AG04450 (cell line): ENCODE measurements at regions of chr11 and their contacts with region 1.

Region 1: GRCh38 chr11:117807482-117808327 is 10.7 kb upstream of the DSCAML1 start:
- DNase-seq: peak; percentile 29
- H3K4me3 ChIP-seq: no peak overlapping the region
- H3K27ac ChIP-seq: no peak overlapping the region
- H3K27me3 ChIP-seq: peaks cover 19% of the 10 kb centered on the region
- CTCF ChIP-seq: peak; percentile 92

Region 2: GRCh38 chr11:117597071-117597470 is 210.6 kb before region 1 on chr11:
- CTCF ChIA-PET with region 1: no interaction called
- POLR2A ChIA-PET with region 1: no interaction called
- DNase-seq: no peak
- H3K4me3 ChIP-seq: no peak overlapping the region
- H3K27ac ChIP-seq: no peak overlapping the region
- H3K27me3 ChIP-seq: peaks cover 4% of the 10 kb centered on the region
- CTCF ChIP-seq: no peak

Region 3: GRCh38 chr11:117790279-117790678 is 17.4 kb before region 1 on chr11:
- CTCF ChIA-PET with region 1: interaction called, 11 read pairs
- POLR2A ChIA-PET with region 1: no interaction called
- DNase-seq: no peak
- H3K4me3 ChIP-seq: no peak overlapping the region
- H3K27ac ChIP-seq: no peak overlapping the region
- H3K27me3 ChIP-seq: peaks cover 35% of the 10 kb centered on the region
- CTCF ChIP-seq: no peak

Region 4: DNA sequence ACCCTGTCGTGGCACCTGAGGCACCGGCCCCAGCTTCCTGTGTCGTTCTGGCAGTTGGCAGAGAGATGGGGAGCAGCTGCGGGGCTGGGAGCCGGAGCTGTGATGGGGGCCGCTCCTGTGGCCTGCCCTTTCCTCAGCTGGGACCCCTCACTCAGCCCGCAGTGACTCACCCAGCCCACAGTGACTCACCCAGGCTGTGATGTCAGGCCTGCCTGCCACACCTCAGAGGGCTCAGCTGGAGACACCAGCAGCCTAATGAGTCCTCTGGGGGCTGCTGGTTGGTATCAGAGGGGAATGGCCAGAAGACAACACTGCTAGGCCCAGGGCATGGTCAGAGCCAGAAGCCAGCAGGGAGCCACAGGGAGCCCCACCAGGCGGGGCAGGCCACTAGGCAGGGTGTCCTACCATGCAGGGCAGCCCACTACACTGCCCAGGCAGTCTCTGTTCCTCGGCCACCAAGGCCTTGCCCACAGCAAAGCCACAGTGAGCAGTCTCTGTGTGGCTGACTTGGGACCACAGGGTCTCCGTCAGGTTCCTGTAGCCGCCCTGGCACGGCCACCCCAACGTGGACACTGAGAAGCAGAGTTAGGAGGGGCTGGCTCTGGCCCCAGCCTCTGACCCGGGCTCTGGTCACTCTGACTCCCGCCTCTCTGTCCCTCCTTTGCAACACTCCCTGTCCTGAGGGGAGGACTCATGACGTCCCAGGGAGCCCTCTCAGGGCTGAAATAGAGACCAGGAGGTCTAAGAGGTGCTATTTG is 21.1 kb after region 1 on chr11:
- CTCF ChIA-PET with region 1: interaction called, 16 read pairs
- POLR2A ChIA-PET with region 1: no interaction called
- DNase-seq: peak; percentile 51
- H3K4me3 ChIP-seq: no peak overlapping the region
- H3K27ac ChIP-seq: no peak overlapping the region
- H3K27me3 ChIP-seq: peaks cover 16% of the 10 kb centered on the region
- CTCF ChIP-seq: no peak

Region 5: GRCh38 chr11:117843666-117844484 is 36.2 kb after region 1 on chr11:
- CTCF ChIA-PET with region 1: interaction called, 19 read pairs
- POLR2A ChIA-PET with region 1: no interaction called
- DNase-seq: peak; percentile 20
- H3K4me3 ChIP-seq: no peak overlapping the region
- H3K27ac ChIP-seq: no peak overlapping the region
- H3K27me3 ChIP-seq: peaks cover 7% of the 10 kb centered on the region
- CTCF ChIP-seq: peak; percentile 98

Region 6: GRCh38 chr11:117907251-117907981 is 99.7 kb after region 1 on chr11:
- CTCF ChIA-PET with region 1: interaction called, 11 read pairs
- POLR2A ChIA-PET with region 1: no interaction called
- DNase-seq: peak; percentile 70
- H3K4me3 ChIP-seq: no peak overlapping the region; the same call in 1 of the 2 replicates
- H3K27ac ChIP-seq: no peak overlapping the region
- H3K27me3 ChIP-seq: peaks cover 3% of the 10 kb centered on the region
- CTCF ChIP-seq: no peak

Region 7: GRCh38 chr11:118051611-118052461 is 244.1 kb after region 1 on chr11:
- CTCF ChIA-PET with region 1: interaction called, 86 read pairs
- POLR2A ChIA-PET with region 1: no interaction called
- DNase-seq: no peak
- H3K4me3 ChIP-seq: no peak overlapping the region
- H3K27ac ChIP-seq: no peak overlapping the region
- H3K27me3 ChIP-seq: peaks cover 5% of the 10 kb centered on the region
- CTCF ChIP-seq: no peak